ENCODE measurements at regions of chr20 and their contacts with region 1.

Region 1: GRCh38 chr20:25399037-25399430 is 8.4 kb upstream of the ABHD12 start:
- DNase-seq: no peak
- ATAC-seq: peak; percentile 64 to 92 (median 84)
- H3K4me3 ChIP-seq: no peak overlapping the region
- H3K27ac ChIP-seq: no peak overlapping the region
- H3K4me1 ChIP-seq: no peaks in the 10 kb centered on the region
- H3K27me3 ChIP-seq: no peaks in the 10 kb centered on the region
- CTCF ChIP-seq: peak; percentile 61

Region 2: DNA sequence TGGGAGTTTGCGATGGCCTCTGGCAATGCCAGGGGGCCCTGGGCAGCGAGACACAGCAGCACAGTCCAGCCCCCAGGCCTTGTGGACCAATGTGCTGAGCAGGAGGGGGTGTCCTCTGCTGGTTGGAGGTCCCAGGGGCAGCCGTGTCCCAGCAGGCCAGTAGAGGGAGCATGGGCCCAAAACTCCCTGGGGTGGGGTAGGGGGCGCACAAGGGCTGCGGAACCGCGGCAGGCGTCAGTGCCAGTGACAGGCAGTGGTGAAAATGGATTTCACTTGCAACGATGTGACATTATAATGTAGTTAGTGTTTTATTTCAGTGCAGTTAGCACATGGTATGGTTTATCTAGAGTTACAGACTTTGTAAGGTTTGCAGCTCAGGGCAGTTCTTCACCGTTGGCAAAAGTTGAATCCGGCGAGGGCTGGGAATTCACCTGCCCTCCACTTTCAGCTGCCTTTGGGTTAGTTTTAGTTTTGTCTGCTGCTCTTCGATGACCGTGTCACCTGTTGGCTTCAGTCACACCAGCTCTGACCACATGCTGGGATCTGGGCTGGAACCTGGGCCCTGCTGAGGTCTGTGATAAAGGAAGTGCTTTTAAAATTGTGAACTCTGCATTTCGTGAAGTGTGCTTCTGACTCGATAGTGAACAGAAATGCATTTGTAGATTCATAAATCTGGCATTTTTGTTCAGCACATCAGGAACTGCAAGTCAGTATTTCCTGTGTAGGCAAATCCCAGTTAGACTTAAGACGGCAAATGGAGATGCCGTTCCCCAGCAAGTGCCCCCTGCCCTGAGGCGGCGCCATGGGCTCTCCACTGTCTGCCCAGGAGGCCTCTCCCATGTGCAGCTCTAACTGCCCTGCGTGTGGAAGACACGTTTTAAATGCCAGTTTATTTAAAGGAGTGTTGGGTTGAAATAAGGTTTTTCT is 104.3 kb before region 1 on chr20:
- intact Hi-C with region 1: loop called (anchors 5 kb)
- DNase-seq: peak; percentile 51 to 72
- ATAC-seq: peak; percentile 36 to 75 (median 68)
- H3K4me3 ChIP-seq: no peak overlapping the region
- H3K27ac ChIP-seq: peak overlapping the region; percentile 84
- H3K4me1 ChIP-seq: peaks cover 28% of the 10 kb centered on the region
- H3K27me3 ChIP-seq: no peaks in the 10 kb centered on the region
- CTCF ChIP-seq: peak; percentile 56

Region 3: DNA sequence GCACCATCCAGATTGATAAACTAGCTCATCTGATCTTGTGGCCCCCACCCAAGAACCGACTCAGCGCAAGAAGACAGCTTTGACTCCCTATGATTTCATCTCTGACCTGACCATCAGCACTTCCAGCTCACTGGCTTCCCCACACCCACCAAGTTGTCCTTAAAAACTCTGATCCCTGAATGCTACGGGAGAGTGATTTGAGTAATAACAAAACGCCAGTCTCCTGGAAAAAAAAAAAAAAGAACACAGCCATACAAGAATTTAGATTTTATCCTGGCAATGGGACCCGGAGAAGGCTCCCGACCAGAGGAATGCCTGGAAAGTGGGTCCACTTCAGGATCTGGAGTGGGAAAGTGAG is 71.2 kb before region 1 on chr20:
- intact Hi-C with region 1: no loop called
- DNase-seq: no peak
- ATAC-seq: no peak
- H3K4me3 ChIP-seq: no peak overlapping the region
- H3K27ac ChIP-seq: no peak overlapping the region
- H3K4me1 ChIP-seq: peaks cover 11% of the 10 kb centered on the region
- H3K27me3 ChIP-seq: no peaks in the 10 kb centered on the region
- CTCF ChIP-seq: no peak

Measured in psoas muscle (tissue), 8 donors.